CD8-positive, alpha-beta T cell (primary cell): ENCODE measurements at regions of chr19 and their contacts with region 1.

Region 1: DNA sequence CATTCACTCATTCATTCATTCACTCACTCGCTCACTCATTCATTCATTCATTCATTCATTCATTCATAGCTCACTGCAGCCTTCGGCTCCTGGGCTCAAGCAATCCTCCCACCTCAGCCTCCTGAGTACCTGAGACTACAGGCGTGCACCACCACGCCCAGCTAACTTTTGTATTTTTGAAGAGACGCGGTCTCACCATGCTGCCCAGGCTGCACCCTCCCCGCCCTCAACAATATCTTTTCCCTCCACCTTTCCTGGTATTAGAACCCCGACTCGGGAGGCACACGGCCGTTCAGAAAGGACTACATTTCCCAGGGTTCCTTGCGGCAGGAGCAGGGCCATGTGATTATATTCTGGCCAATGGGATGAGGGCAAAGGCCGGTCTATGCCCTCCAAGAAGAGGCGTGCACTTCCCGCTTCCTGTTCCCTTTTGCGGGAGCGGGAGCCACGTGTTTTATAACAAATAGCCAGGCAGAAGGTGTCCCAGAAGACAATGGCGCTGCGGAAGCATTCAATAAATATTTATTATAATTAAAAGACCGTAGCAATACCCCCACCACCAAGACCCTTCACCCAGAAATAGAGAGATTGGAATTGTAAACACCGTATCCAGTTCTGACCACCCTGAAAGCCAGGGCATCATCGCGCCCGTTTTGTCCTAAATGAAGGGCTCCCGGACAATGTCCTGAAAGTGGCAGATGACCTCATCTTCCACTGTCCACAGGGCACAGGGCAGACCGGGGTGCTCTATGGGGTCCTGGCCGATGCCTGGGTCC is 15.9 kb downstream of the TICAM1 start:
- DNase-seq: peak; percentile 45 to 89 (median 74)
- ATAC-seq: peak; percentile 83
- H3K4me3 ChIP-seq: peak overlapping the region; percentile 36
- H3K4me3 Mint-ChIP-seq: peak overlapping the region; percentile 69
- H3K27ac ChIP-seq: peak overlapping the region in 1 of 2 experiments; percentile 36
- H3K27ac Mint-ChIP-seq: peak overlapping the region; percentile 16
- H3K4me1 ChIP-seq: peaks cover 8% of the 10 kb centered on the region
- H3K4me1 Mint-ChIP-seq: peaks cover 11% of the 10 kb centered on the region
- H3K27me3 ChIP-seq: no peaks in the 10 kb centered on the region
- H3K27me3 Mint-ChIP-seq: no peaks in the 10 kb centered on the region
- CTCF ChIP-seq: no peak

Region 2: GRCh38 chr19:4768934-4769777 is 46.5 kb before region 1 on chr19:
- CTCF ChIA-PET with region 1: no interaction called
- POLR2A ChIA-PET with region 1: no interaction called
- intact Hi-C with region 1: no loop called
- DNase-seq: peak; percentile 61 to 89 (median 80)
- ATAC-seq: peak; percentile 99
- H3K4me3 ChIP-seq: no peak overlapping the region
- H3K4me3 Mint-ChIP-seq: no peak overlapping the region
- H3K27ac ChIP-seq: no peak overlapping the region
- H3K27ac Mint-ChIP-seq: no peak overlapping the region
- H3K4me1 ChIP-seq: no peaks in the 10 kb centered on the region
- H3K4me1 Mint-ChIP-seq: peaks cover 3% of the 10 kb centered on the region
- H3K27me3 ChIP-seq: peaks cover 0 to 8% of the 10 kb centered on the region in 2 experiments
- H3K27me3 Mint-ChIP-seq: peaks cover 26% of the 10 kb centered on the region
- CTCF ChIP-seq: no peak

Region 3: DNA sequence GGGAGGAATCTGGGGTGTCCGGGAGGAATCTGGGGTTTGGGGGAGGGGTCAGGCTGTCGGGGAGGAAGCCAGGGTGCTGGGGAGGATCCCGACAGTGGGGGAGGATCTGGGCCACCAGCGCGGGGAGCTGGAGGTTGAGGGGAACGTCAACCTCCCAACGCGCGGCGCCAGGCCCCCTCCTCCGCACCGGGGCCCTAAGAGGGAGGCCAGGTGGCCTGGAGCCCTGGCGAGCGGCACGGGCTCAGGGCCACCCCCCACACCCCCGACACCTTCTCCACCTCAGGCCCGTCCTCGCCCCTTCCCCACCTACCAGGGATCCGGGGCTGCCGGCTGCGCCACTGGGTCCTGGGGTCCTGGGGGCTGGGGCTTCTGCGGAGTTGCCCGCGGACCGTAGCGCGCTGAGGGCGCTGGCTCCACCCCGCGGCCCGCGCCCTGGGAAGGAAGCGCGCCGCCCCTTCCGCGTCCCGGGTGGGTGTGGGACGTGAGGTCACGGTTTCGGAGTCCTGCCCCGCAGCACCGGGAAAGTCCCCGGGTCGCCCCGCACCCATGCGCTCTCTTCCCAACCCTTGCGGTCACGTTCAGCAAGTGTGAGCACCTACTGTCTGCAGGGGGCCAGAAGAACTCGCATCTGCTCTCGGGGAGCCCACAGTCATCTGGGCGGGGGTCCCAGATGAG is 15.8 kb after region 1 on chr19 and contains the start of gene TICAM1:
- CTCF ChIA-PET with region 1: interaction called, 13 read pairs
- POLR2A ChIA-PET with region 1: interaction called, 3 read pairs
- intact Hi-C with region 1: loop called in 1 of 2 experiments (anchors 2 kb)
- DNase-seq: peak; percentile 44 to 95 (median 74)
- ATAC-seq: peak; percentile 91
- H3K4me3 ChIP-seq: peak within 1 kb of the TSS; percentile 79 to 92
- H3K4me3 Mint-ChIP-seq: peak within 1 kb of the TSS; percentile 82
- H3K27ac ChIP-seq: peak within 1 kb of the TSS; percentile 68 to 91
- H3K27ac Mint-ChIP-seq: peak within 1 kb of the TSS; percentile 89
- H3K4me1 ChIP-seq: peaks cover 16% of the 10 kb centered on the region
- H3K4me1 Mint-ChIP-seq: peaks cover 25% of the 10 kb centered on the region
- H3K27me3 ChIP-seq: no peaks in the 10 kb centered on the region
- H3K27me3 Mint-ChIP-seq: no peaks in the 10 kb centered on the region
- CTCF ChIP-seq: no peak
- total RNA-seq, gene TICAM1: 8.8 to 9.4 TPM

Region 4: DNA sequence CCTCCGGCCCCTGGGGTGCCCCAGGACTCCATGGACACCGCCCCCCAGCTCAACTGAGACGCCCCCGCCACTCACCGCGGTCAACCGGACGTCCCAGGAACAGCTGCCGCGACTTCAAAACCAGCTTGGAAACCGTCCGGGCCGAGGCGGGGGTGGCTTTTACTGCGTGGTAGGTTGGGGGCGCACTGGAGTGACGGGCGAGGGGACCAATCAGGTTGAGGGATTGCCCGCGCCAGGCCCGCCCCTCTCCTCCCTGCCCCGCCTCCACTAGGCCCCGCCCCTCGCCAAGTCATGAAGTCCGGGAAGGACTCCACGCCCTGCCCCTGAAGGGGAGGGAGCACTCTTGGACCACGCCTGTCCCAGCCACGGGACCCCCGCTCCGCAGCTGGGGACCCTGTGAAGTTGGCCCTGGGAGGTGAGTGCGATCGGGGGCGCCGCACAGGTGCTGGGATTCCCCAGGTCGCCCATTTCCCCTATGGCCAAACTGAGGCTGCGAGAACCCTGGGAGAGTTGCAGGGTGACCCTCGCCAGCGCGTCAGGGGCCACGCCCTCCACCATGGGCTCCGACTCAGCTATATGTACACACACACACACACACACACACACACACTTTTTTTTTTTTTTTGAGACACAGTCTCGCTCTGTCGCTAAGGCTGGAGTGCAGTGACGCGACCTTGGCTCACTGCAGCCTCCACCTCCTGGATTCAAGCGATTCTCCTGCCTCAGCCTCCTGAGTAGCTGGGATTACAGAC is 52.1 kb after region 1 on chr19 and contains the start of gene PLIN3:
- CTCF ChIA-PET with region 1: interaction called, 13 read pairs
- POLR2A ChIA-PET with region 1: no interaction called
- intact Hi-C with region 1: no loop called
- DNase-seq: peak; percentile 74 to 91 (median 87)
- ATAC-seq: peak; percentile 94
- H3K4me3 ChIP-seq: peak within 1 kb of the TSS; percentile 72 to 78
- H3K4me3 Mint-ChIP-seq: peak within 1 kb of the TSS; percentile 78
- H3K27ac ChIP-seq: peak within 1 kb of the TSS; percentile 30 to 55
- H3K27ac Mint-ChIP-seq: peak within 1 kb of the TSS; percentile 49
- H3K4me1 ChIP-seq: peaks cover 17% of the 10 kb centered on the region
- H3K4me1 Mint-ChIP-seq: peaks cover 16% of the 10 kb centered on the region
- H3K27me3 ChIP-seq: no peaks in the 10 kb centered on the region
- H3K27me3 Mint-ChIP-seq: no peaks in the 10 kb centered on the region
- CTCF ChIP-seq: no peak
- total RNA-seq, gene PLIN3: 16.2 to 16.7 TPM

Region 5: GRCh38 chr19:4916292-4917082 is 100.9 kb after region 1 on chr19:
- CTCF ChIA-PET with region 1: interaction called, 45 read pairs
- POLR2A ChIA-PET with region 1: no interaction called
- intact Hi-C with region 1: loop called (anchors 1 kb)
- DNase-seq: peak; percentile 19 to 82 (median 64)
- ATAC-seq: peak; percentile 30
- H3K4me3 ChIP-seq: peak overlapping the region; percentile 96 to 100
- H3K4me3 Mint-ChIP-seq: peak overlapping the region; percentile 99
- H3K27ac ChIP-seq: peak overlapping the region; percentile 90 to 96
- H3K27ac Mint-ChIP-seq: peak overlapping the region; percentile 100
- H3K4me1 ChIP-seq: peaks cover 34% of the 10 kb centered on the region
- H3K4me1 Mint-ChIP-seq: peaks cover 41% of the 10 kb centered on the region
- H3K27me3 ChIP-seq: no peaks in the 10 kb centered on the region
- H3K27me3 Mint-ChIP-seq: no peaks in the 10 kb centered on the region
- CTCF ChIP-seq: no peak

Region 6: GRCh38 chr19:5031231-5032100 is 215.9 kb after region 1 on chr19:
- CTCF ChIA-PET with region 1: interaction called, 93 read pairs
- POLR2A ChIA-PET with region 1: no interaction called
- intact Hi-C with region 1: no loop called
- DNase-seq: peak; percentile 70 to 92 (median 81)
- ATAC-seq: peak; percentile 87
- H3K4me3 ChIP-seq: no peak overlapping the region
- H3K4me3 Mint-ChIP-seq: no peak overlapping the region
- H3K27ac ChIP-seq: no peak overlapping the region
- H3K27ac Mint-ChIP-seq: no peak overlapping the region
- H3K4me1 ChIP-seq: peaks cover 7% of the 10 kb centered on the region
- H3K4me1 Mint-ChIP-seq: peaks cover 8% of the 10 kb centered on the region
- H3K27me3 ChIP-seq: no peaks in the 10 kb centered on the region
- H3K27me3 Mint-ChIP-seq: no peaks in the 10 kb centered on the region
- CTCF ChIP-seq: peak; percentile 88

Region 7: GRCh38 chr19:5091018-5091683 is 275.5 kb after region 1 on chr19:
- CTCF ChIA-PET with region 1: no interaction called
- POLR2A ChIA-PET with region 1: no interaction called
- intact Hi-C with region 1: no loop called
- DNase-seq: no peak
- ATAC-seq: no peak
- H3K4me3 ChIP-seq: no peak overlapping the region
- H3K4me3 Mint-ChIP-seq: no peak overlapping the region
- H3K27ac ChIP-seq: no peak overlapping the region
- H3K27ac Mint-ChIP-seq: no peak overlapping the region
- H3K4me1 ChIP-seq: no peaks in the 10 kb centered on the region
- H3K4me1 Mint-ChIP-seq: peaks cover 5% of the 10 kb centered on the region
- H3K27me3 ChIP-seq: no peaks in the 10 kb centered on the region
- H3K27me3 Mint-ChIP-seq: no peaks in the 10 kb centered on the region
- CTCF ChIP-seq: no peak